ENCODE measurements at regions of chr11 and their contacts with region 1.

Region 1: DNA sequence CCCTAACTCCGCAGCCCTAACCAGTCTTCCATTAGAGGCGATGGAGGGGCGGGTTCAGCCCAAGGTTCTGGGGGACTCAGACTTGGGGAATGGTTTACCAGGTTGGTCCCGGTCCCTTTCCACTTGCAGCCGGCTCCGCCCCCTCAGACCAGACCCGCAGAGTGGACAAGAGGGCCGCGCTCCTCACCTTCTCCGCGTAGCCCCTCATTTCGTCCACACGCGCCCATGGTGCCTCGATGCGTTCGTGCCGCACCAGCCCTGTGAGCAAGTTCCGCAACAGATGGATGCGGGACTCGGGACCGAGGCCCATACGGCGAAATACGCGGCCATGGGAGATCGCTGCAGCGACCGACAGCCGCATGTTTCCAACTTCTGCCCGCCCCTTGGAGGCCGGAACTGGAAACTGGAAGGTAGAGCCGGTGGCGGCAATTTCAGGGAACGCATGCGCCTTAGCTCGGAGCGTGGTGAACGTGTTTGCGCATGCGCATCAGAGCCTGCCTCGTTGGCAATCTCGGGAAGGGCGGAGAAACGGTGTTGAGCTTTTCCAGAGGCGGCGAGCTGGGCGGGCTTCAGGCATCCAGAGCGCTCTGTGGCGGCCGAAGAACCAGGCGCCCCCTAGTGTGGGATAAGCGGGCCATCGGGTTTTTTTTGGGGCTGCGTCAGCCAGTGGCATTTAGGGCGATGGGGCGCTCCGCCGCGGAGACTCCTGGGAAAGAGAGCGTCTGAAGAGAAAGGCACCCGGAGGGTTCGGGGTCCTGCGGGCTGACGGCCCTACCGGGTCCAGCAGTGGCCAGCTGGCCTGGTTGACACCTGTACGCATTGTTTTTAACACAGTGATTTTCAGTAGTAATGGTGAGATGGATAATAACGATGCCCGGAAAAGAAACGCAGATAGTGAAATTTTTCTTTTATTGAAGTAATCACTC is at the start of gene MRPL17:
- DNase-seq: peak; percentile 99 to 100 (median 99)
- ATAC-seq: peak; percentile 97 to 98
- H3K4me3 ChIP-seq: peak within 1 kb of the TSS; percentile 56
- H3K27ac ChIP-seq: peak within 1 kb of the TSS; percentile 76
- H3K4me1 ChIP-seq: no peaks in the 10 kb centered on the region
- H3K27me3 ChIP-seq: no peaks in the 10 kb centered on the region
- total RNA-seq, gene MRPL17: 36.7 to 45.1 (median 41.9) TPM

Region 2: DNA sequence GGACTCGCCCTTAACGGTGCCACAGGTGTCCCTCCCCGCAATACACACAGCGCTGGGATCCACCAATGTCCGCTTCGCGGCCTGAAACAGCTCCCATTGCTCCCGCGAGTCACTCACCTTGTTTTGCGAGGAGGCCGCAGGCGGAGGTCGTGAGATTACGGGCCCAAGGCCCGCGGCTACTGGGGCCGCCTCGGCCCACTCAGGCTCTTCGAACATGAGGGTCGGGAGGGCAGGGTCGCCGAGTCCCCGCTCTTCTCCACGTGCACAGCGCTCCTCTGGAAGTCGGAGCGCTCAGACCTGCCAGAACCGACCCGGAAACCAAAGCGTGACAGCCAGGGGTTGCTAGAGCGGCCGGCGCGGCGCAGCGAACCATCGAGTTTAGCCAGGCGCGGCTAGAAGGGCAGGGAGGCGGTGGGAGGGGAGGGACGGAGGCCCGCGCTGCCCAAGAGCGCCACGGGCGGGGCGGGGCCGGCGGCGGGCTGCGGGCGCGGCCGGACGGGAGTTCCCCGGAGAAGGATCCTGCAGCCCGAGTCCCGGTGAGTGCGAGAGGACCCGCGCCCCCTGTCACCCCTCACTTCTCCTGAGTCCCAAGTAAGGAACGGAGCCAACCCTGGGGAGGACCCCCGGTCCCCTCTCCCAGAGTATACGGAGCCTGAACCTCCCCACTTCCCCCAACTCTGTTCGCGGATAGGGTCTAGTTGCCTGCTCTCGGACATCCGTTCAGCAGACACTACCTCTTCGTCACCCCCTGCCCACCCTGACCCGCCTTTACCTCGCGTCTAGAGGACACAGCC is 79.7 kb before region 1 on chr11 and contains the starts of genes ILK and RRP8:
- intact Hi-C with region 1: loop called in 1 of 4 experiments (anchors 5 kb)
- DNase-seq: peak; percentile 91 to 97 (median 97)
- ATAC-seq: peak; percentile 91 to 93
- H3K4me3 ChIP-seq: peak within 1 kb of the TSS; percentile 87
- H3K27ac ChIP-seq: peak within 1 kb of the TSS; percentile 99
- H3K4me1 ChIP-seq: peaks cover 23% of the 10 kb centered on the region
- H3K27me3 ChIP-seq: no peaks in the 10 kb centered on the region
- total RNA-seq, gene ILK: 176 to 196 (median 192) TPM
- total RNA-seq, gene RRP8: 15.8 to 21.7 (median 18.7) TPM

Region 3: GRCh38 chr11:6612213-6613041 is 70.8 kb before region 1 on chr11 and contains the start of gene TAF10:
- intact Hi-C with region 1: loop called in 3 of 4 experiments (anchors 2 to 5 kb)
- DNase-seq: peak; percentile 99 to 100 (median 99)
- ATAC-seq: peak; percentile 95
- H3K4me3 ChIP-seq: peak within 1 kb of the TSS; percentile 91
- H3K27ac ChIP-seq: peak within 1 kb of the TSS; percentile 98
- H3K4me1 ChIP-seq: peaks cover 5% of the 10 kb centered on the region
- H3K27me3 ChIP-seq: no peaks in the 10 kb centered on the region
- total RNA-seq, gene TAF10: 96.9 to 115 (median 99.1) TPM

Region 4: DNA sequence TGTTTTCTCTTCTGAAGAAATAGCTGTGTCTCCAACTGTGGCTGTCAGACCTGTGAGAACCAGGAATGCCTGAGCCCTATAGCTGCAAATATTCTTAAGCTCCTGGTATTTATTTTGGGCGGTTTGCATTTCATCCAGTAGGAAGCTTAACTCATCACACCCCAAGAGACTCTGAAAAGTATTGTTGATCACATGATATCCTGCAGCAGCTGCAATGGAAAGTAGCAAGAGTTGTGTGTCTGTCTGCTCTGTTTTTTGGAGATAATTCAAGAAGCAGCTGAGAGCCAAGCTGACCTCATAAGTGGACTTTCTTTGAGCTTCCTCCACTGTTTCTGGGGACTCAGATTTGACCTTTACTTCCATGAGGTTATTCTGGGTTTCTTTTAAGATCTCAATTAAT is 36.4 kb after region 1 on chr11:
- intact Hi-C with region 1: no loop called
- DNase-seq: no peak
- ATAC-seq: peak in 1 of 2 donors; percentile 14
- H3K4me3 ChIP-seq: no peak overlapping the region
- H3K27ac ChIP-seq: no peak overlapping the region
- H3K4me1 ChIP-seq: no peaks in the 10 kb centered on the region
- H3K27me3 ChIP-seq: no peaks in the 10 kb centered on the region

Region 5: DNA sequence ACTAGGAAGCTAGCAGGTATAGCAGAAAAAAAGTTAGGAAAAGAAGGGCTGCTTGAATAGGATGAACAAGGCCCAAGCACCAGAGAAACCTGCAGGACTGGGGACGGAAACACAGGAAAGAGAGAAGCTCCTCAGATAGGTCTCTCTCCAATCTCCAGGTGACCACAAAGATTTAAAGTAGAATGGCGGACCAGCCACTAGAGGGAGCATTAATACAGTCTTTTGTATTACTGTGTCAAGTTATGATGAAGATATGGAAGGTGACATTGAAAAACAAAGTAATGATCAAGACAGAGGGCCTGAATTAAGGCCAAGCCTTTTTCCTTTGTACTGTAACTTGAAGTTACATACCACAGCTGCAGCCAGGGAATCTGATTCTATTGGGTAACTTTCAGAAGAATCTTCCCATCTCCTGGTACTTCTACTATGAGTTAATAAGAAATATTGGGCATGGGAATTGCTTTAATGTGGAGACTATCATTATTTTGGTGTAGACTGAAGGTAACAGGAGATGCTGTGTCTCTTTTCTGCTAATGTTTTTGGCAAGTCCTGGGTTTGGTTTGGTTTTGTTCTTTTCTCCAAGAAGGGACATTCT is 54.8 kb after region 1 on chr11:
- intact Hi-C with region 1: no loop called
- DNase-seq: peak in 1 of 3 donors; percentile 43
- ATAC-seq: peak in 1 of 2 donors; percentile 67
- H3K4me3 ChIP-seq: no peak overlapping the region
- H3K27ac ChIP-seq: no peak overlapping the region
- H3K4me1 ChIP-seq: no peaks in the 10 kb centered on the region
- H3K27me3 ChIP-seq: no peaks in the 10 kb centered on the region